ENCODE measurements at regions of chr1 and their contacts with region 1.

Region 1: GRCh38 chr1:94541175-94542087 is at the start of gene F3:
- DNase-seq: peak; percentile 95 to 97
- ATAC-seq: peak; percentile 95
- H3K4me3 ChIP-seq: peak within 1 kb of the TSS; percentile 74 to 89
- H3K27ac ChIP-seq: peak within 1 kb of the TSS; percentile 36 to 78
- H3K4me1 ChIP-seq: no peaks in the 10 kb centered on the region
- H3K27me3 ChIP-seq: no peaks in the 10 kb centered on the region
- total RNA-seq, gene F3: 33.3 to 40.0 TPM

Region 2: GRCh38 chr1:94468708-94469107 is 72.7 kb before region 1 on chr1:
- intact Hi-C with region 1: no loop called
- DNase-seq: no peak
- ATAC-seq: no peak
- H3K4me3 ChIP-seq: no peak overlapping the region
- H3K27ac ChIP-seq: no peak overlapping the region
- H3K4me1 ChIP-seq: no peaks in the 10 kb centered on the region
- H3K27me3 ChIP-seq: no peaks in the 10 kb centered on the region

Region 3: DNA sequence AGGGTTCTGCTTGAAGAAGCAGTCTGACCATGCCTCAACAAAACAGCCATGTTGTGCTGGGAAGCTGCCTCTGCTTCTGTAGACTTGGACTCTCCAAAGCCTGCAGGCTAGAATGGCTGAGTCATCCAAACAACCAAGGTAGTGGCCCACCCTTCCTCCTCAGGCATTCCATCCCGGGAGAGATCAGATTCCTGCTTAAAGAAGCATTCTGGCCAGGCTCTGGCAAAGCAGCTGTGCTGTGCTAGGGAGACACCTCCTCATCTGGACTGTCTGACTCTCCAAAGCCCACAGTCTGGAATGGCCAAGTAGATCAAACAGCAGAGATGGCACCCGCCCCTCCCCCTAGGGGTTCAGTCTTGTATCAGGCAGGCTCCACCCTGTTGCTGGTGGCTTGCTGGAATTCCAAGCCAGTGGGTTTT is 38.5 kb after region 1 on chr1:
- intact Hi-C with region 1: loop called in 1 of 2 experiments (anchors 2 kb)
- DNase-seq: peak in 1 of 2 donors; percentile 55
- ATAC-seq: peak; percentile 62
- H3K4me3 ChIP-seq: no peak overlapping the region
- H3K27ac ChIP-seq: peak overlapping the region in 1 of 2 donors; percentile 7
- H3K4me1 ChIP-seq: peaks cover 5 to 11% of the 10 kb centered on the region in 2 donors
- H3K27me3 ChIP-seq: no peaks in the 10 kb centered on the region

Region 4: DNA sequence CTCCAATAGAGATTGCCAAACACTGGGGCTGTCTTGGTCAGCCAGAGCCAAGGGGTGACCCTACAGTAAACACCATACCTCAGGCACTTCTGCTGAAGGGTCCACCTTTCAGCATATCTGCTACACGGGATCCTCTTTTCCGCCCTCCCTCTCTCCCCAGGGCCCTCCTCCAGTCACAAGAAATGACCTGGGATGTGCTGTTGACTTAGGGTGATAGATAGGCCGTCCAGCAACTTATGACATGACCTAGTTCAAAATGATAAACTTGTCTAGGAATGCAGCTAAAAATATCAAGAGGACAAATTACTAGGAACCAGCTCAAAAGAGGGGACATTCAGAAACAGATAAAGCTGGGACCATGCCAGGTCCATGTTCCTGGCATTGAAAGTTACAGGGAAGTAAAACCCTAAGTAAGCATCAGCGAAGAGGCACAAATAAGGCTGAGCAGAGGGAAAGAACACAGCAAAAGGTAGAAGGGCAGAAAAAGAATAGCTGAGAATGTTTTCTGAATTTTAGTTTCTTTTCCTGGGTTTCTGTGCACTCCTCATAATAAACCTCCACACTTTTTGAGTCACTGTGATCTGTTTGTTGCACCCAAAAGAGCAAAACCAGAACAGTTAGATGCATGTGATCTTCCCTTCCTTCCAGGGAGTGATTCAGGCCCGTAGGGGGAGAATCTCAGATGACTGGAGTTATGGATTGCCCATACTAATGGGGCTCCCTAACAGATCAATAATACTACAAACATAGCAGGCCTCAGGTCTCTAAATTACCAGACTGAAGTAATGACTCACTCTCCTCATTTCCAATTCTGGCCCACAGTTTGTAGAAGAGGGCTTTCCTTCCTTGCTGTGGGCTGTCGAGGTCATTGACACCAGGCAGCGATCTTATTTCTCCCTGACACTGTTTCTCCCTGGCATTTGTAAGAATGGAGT is 49.0 kb after region 1 on chr1:
- intact Hi-C with region 1: loop called in 1 of 2 experiments (anchors 5 kb)
- DNase-seq: no peak
- ATAC-seq: peak; percentile 55
- H3K4me3 ChIP-seq: no peak overlapping the region
- H3K27ac ChIP-seq: peak overlapping the region in 1 of 2 donors; percentile 32
- H3K4me1 ChIP-seq: peaks cover 1 to 5% of the 10 kb centered on the region in 2 donors
- H3K27me3 ChIP-seq: no peaks in the 10 kb centered on the region

Region 5: DNA sequence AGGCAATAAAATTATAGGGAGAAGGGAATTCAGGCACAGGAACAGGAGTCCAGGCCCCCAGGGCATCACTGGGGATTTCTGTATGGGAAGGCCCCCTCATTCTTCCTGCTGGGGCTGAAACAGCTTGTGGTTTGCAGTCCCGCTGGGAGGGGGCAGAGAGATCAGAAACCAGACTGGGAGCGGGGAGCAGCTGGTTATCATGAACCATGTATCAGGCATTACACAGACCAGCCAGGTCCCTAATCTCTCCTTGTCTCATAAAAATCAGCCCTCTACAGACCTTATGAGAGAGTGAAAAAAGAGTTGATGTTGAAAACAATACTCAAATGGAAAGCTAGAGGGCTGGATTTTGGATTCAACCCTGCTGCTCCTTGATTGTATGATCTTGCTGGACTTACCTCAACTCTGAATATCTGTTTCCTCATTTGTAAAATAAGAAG is 93.6 kb after region 1 on chr1:
- intact Hi-C with region 1: loop called in 1 of 2 experiments (anchors 5 kb)
- DNase-seq: no peak
- ATAC-seq: no peak
- H3K4me3 ChIP-seq: no peak overlapping the region
- H3K27ac ChIP-seq: no peak overlapping the region
- H3K4me1 ChIP-seq: no peaks in the 10 kb centered on the region
- H3K27me3 ChIP-seq: no peaks in the 10 kb centered on the region

Region 6: DNA sequence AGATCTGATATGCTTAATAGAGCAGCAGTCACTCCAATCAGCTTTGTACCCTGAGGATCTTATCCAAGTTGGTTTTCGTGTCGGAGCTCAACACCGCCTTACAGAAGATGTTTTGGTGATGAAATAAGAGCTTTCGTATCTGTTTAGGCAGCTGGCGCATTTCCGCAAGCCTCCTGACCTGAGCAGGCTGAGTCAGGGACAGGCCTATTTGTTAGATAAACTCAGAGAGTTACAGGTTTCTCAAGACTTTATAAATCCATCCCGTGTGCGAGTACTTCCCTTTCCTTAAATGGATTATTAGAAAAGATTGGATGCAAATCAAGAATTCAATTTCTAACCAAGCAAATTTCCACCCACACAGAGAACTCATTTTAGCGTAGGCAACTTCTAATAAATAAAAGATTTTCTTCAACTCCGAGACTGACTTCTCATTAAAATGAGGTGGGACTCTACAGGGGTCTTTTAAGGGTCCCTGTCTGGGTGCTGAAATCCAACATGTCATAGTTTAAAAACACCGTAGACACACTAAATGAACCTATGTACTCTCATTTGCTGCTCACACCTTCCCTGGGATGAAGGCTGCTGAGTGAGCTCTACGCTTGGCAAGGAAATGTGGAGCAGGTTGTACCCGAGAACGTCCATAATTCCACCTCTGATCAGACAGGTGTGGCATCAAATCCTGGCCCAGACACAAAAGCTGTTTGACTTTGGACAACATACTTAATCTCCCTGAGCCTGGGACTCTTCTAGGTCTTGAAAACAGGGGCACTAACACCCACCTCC is 107.0 kb after region 1 on chr1:
- intact Hi-C with region 1: loop called in 1 of 2 experiments (anchors 5 kb)
- DNase-seq: peak; percentile 87 to 88
- ATAC-seq: peak; percentile 79
- H3K4me3 ChIP-seq: no peak overlapping the region
- H3K27ac ChIP-seq: peak overlapping the region; percentile 45 to 64
- H3K4me1 ChIP-seq: peaks cover 0 to 6% of the 10 kb centered on the region in 2 donors
- H3K27me3 ChIP-seq: no peaks in the 10 kb centered on the region

Region 7: DNA sequence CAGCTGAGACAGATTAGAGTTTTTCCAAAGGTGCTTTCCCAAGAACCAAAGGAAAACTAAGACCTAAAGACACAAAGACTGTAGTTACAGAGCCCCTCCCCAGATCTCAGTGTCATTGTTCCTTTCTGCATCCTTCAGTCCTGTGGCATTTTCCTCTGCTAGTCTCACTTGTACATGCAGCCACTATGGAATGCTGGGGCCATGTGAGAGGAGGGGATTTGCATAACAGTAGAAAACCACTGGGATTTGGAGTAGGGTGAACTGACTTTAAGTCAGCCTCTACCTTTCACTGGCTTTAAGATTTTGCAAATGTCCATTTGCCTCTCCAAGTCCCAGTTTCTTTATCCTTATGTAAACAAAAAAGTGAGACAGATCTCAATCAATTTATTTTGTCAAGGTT is 119.6 kb after region 1 on chr1:
- intact Hi-C with region 1: no loop called
- DNase-seq: no peak
- ATAC-seq: no peak
- H3K4me3 ChIP-seq: no peak overlapping the region
- H3K27ac ChIP-seq: no peak overlapping the region
- H3K4me1 ChIP-seq: peaks cover 0 to 9% of the 10 kb centered on the region in 2 donors
- H3K27me3 ChIP-seq: no peaks in the 10 kb centered on the region

Region 8: GRCh38 chr1:94783342-94784264 is 242.2 kb after region 1 on chr1:
- intact Hi-C with region 1: loop called in 1 of 2 experiments (anchors 5 kb)
- DNase-seq: peak; percentile 93 to 94
- ATAC-seq: peak; percentile 96
- H3K4me3 ChIP-seq: no peak overlapping the region
- H3K27ac ChIP-seq: peak overlapping the region; percentile 97 to 99
- H3K4me1 ChIP-seq: peaks cover 0 to 3% of the 10 kb centered on the region in 2 donors
- H3K27me3 ChIP-seq: no peaks in the 10 kb centered on the region

Region 9: DNA sequence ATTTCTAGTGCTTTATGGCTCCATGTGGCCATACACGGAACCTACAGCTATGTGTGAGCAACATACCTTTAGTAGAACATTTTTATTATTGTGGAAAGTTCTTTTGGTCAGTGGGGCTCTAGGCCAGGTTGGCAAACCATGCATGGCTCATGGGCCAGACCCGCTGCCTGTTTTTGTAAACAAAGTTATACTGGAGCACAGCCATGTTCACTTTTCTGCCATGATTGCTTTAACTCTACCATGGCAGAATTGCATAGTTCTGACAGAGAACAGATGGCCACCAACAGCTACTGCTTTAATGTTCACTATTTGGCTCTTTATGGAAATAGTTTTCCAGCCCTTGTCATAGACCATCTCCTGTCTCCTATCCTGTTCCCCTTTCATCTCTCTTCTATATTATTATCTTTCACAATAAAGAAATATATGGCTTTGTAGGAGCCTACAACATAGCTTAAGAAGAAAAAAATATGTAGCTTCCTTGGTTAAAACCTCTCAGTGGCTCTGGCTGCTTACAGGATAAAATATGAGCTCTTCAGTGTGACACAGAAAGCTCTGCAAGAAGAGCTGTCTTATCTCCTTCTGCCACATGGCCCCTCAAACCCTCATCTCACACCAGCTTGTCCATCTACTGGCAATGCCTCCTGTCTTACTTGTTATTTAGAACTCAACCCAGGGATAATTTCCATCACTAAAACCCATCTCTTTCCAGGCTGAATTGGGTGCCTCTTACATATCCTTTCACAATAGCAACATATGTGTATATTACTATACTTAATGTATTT is 638.0 kb after region 1 on chr1:
- intact Hi-C with region 1: no loop called
- DNase-seq: no peak
- ATAC-seq: peak; percentile 19
- H3K4me3 ChIP-seq: no peak overlapping the region
- H3K27ac ChIP-seq: no peak overlapping the region
- H3K4me1 ChIP-seq: peaks cover 0 to 2% of the 10 kb centered on the region in 2 donors
- H3K27me3 ChIP-seq: no peaks in the 10 kb centered on the region